CD14-positive monocyte (primary cell): ENCODE measurements at regions of chr20 and their contacts with region 1.

Region 1: GRCh38 chr20:48828022-48828743 is 384 bp upstream of the PREX1 start:
- DNase-seq: peak; percentile 74 to 78 (median 74)
- H3K4me3 ChIP-seq: peak overlapping the region; percentile 44 to 82 (median 76)
- H3K4me3 Mint-ChIP-seq: peak overlapping the region; percentile 82 to 92
- H3K27ac ChIP-seq: peak overlapping the region in 1 of 2 donors; percentile 72
- H3K27ac Mint-ChIP-seq: peak overlapping the region; percentile 68 to 94 (median 89)
- H3K4me1 ChIP-seq: peaks cover 60 to 74% of the 10 kb centered on the region in 2 donors
- H3K4me1 Mint-ChIP-seq: peaks cover 69% of the 10 kb centered on the region
- H3K27me3 ChIP-seq: no peaks in the 10 kb centered on the region
- H3K27me3 Mint-ChIP-seq: no peaks in the 10 kb centered on the region
- CTCF ChIP-seq: peak; percentile 7

Region 2: GRCh38 chr20:48657475-48658470 is 170.4 kb before region 1 on chr20:
- intact Hi-C with region 1: loop called in 1 of 2 experiments (anchors 10 kb)
- DNase-seq: peak; percentile 57 to 69 (median 66)
- H3K4me3 ChIP-seq: no peak overlapping the region
- H3K4me3 Mint-ChIP-seq: no peak overlapping the region
- H3K27ac ChIP-seq: peak overlapping the region in 1 of 2 donors; percentile 17
- H3K27ac Mint-ChIP-seq: peak overlapping the region in 5 of 7 donors; percentile 30 to 78 (median 57)
- H3K4me1 ChIP-seq: no peaks in the 10 kb centered on the region
- H3K4me1 Mint-ChIP-seq: peaks cover 8% of the 10 kb centered on the region
- H3K27me3 ChIP-seq: no peaks in the 10 kb centered on the region
- H3K27me3 Mint-ChIP-seq: peaks cover 0 to 2% (median 0%) of the 10 kb centered on the region in 3 donors
- CTCF ChIP-seq: peak; percentile 90

Region 3: DNA sequence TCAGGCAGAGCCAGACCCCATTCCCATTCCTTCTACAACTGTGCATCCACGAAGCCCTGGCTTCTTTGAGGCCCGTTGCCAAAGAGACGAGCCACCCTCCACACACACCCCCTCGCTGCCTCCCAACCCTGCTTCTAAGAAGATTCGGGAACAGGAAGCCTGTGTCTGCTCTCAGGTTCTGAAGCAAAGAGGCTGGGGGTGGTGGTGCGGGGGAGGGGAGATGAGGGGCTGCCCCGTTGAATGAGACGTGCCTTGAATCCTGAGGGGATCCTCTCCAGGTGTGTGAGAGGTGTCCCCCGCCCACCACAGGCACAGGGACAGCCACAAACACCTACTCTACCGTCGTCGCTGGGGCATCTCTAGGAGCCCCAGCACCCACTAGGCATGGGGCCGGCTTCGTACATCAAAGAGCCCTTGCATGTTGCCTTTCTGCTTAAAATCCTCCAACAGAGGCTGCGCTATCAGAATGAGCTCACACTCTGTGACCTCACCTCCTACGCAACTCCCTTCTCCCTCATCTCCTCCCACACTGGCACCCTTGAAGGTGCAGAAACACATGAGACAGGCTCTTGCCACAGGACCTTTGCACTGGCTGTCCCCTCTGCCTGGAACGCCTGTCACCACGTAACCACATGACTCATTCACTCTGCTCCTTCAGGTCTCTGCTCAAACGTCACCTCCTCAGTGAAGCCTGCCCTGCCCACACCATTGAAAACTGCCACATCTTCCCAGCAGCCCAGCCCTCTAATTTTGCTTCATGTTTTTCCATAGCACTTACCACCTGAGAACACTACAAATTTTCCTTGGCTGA is 58.9 kb before region 1 on chr20:
- intact Hi-C with region 1: loop called (anchors 2 to 5 kb)
- DNase-seq: peak; percentile 88 to 95 (median 92)
- H3K4me3 ChIP-seq: no peak overlapping the region
- H3K4me3 Mint-ChIP-seq: peak overlapping the region in 1 of 2 donors; percentile 47
- H3K27ac ChIP-seq: peak overlapping the region; percentile 37 to 94
- H3K27ac Mint-ChIP-seq: peak overlapping the region; percentile 71 to 99 (median 85)
- H3K4me1 ChIP-seq: peaks cover 93 to 99% of the 10 kb centered on the region in 2 donors
- H3K4me1 Mint-ChIP-seq: peaks cover 99% of the 10 kb centered on the region
- H3K27me3 ChIP-seq: no peaks in the 10 kb centered on the region
- H3K27me3 Mint-ChIP-seq: no peaks in the 10 kb centered on the region
- CTCF ChIP-seq: no peak

Region 4: DNA sequence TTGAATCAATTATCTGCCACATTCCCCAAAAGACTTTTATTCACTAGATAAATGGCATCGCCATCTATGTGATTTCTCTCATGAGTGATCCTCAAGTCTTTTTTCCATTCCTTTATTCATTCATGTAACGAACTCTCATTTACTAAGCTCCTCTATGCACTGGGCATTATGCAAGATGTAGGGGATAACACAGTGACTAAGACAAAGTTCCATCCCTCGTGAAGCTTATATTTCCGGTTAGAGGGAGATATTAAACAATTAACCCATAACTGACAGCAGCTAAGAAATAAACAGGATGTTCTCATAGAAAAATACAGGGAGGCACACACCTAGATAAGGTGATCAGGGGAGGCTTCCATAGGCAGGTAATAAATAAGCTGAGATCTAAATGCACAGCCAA is 16.8 kb after region 1 on chr20:
- intact Hi-C with region 1: loop called in 1 of 2 experiments (anchors 2 kb)
- DNase-seq: peak in 2 of 3 donors; percentile 55 to 81
- H3K4me3 ChIP-seq: no peak overlapping the region
- H3K4me3 Mint-ChIP-seq: no peak overlapping the region
- H3K27ac ChIP-seq: no peak overlapping the region
- H3K27ac Mint-ChIP-seq: peak overlapping the region in 5 of 7 donors; percentile 12 to 86 (median 52)
- H3K4me1 ChIP-seq: peaks cover 41 to 44% of the 10 kb centered on the region in 2 donors
- H3K4me1 Mint-ChIP-seq: peaks cover 54% of the 10 kb centered on the region
- H3K27me3 ChIP-seq: no peaks in the 10 kb centered on the region
- H3K27me3 Mint-ChIP-seq: peaks cover 0 to 4% (median 0%) of the 10 kb centered on the region in 3 donors
- CTCF ChIP-seq: no peak

Region 5: GRCh38 chr20:48889144-48890114 is 61.2 kb after region 1 on chr20:
- intact Hi-C with region 1: loop called in 1 of 2 experiments (anchors 5 kb)
- DNase-seq: no peak
- H3K4me3 ChIP-seq: no peak overlapping the region
- H3K4me3 Mint-ChIP-seq: no peak overlapping the region
- H3K27ac ChIP-seq: no peak overlapping the region
- H3K27ac Mint-ChIP-seq: no peak overlapping the region
- H3K4me1 ChIP-seq: no peaks in the 10 kb centered on the region
- H3K4me1 Mint-ChIP-seq: peaks cover 6% of the 10 kb centered on the region
- H3K27me3 ChIP-seq: no peaks in the 10 kb centered on the region
- H3K27me3 Mint-ChIP-seq: peaks cover 0 to 11% (median 0%) of the 10 kb centered on the region in 3 donors
- CTCF ChIP-seq: no peak

Region 6: DNA sequence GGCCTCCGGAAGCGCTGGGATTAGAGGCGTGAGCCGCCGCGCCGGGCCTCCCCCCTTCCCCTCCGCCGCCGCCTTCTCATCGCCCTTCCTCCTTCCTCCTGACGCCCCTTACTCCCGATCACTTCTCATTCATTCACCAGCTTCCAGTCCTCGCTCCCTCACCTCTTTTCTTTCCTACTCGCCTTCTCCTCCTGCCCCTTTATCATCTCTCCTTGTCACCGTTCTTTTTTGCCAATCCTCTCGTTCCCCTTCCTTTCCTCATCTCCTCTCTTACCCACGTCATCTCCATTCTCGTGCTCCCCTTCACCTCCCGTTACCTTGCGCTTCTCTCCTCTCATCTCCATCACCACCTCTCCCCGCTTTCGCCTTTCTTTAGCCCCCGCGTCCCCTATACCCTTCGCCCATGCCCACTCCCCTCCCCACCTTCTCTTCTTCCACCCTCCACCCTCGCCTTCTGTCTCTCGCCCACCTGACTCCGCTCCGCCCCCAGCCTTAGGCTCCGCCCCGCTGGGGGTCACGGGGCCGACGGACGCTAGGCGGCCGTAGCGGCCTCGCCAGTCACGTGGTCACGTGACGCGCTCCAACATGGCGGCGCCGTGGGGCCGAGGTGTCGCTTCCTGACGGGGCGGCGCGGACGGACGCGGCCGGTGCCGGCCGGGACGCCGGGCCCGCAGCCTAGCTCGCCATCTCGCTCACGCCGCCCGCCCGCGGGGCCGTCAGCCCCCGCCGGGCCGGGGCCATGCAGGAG is 93.1 kb after region 1 on chr20 and contains the start of gene ARFGEF2:
- intact Hi-C with region 1: loop called in 1 of 2 experiments (anchors 5 kb)
- DNase-seq: peak; percentile 92 to 95 (median 93)
- H3K4me3 ChIP-seq: peak within 1 kb of the TSS; percentile 66 to 80 (median 77)
- H3K4me3 Mint-ChIP-seq: peak within 1 kb of the TSS; percentile 94 to 97
- H3K27ac ChIP-seq: peak within 1 kb of the TSS; percentile 88 to 98
- H3K27ac Mint-ChIP-seq: peak within 1 kb of the TSS; percentile 99 to 100 (median 100)
- H3K4me1 ChIP-seq: peaks cover 43 to 52% of the 10 kb centered on the region in 2 donors
- H3K4me1 Mint-ChIP-seq: peaks cover 57% of the 10 kb centered on the region
- H3K27me3 ChIP-seq: no peaks in the 10 kb centered on the region
- H3K27me3 Mint-ChIP-seq: peaks cover 0 to 3% (median 1%) of the 10 kb centered on the region in 3 donors
- CTCF ChIP-seq: no peak
- polyA plus RNA-seq, gene ARFGEF2: 4.6 to 10.9 (median 5.5) TPM